K562 (cell line): ENCODE measurements at regions of chrX and their contacts with region 1.

Region 1: DNA sequence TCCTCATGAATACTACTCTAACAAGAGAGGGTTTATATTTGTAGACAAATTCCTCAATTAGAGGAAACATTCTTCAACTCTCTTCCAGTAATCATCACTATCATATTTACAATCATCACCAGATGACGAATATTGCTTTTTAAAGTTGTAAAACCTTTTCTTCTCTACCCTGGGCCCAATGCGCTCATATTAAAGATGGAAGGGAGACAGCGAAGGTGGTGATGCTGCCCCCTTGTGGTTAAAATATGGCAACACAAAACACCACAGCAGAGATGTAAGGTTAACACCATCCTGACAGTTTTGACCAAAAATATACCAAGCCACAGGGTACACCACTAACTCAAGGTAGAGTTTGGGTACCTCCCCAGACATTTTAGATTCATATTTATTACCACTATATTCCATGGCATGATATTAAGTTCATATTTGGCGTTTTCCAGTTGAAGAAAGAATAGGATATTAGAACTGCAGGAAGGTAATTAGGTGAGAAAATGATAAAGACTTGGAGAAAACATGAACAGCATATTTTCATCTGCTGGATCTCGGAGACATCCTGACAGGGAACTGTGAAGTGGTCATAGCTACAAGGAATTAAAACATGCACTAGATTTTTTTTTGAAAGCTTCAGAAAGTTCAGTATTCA is 72.8 kb downstream of the SLC9A7 start:
- DNase-seq: peak; percentile 22 to 50 (median 40)
- ATAC-seq: peak; percentile 84
- H3K4me3 ChIP-seq: no peak overlapping the region
- H3K27ac ChIP-seq: no peak overlapping the region
- H3K4me1 ChIP-seq: no peaks in the 10 kb centered on the region
- H3K27me3 ChIP-seq: no peaks in the 10 kb centered on the region
- CTCF ChIP-seq: peak; percentile 55 to 64 (median 62)
- EP300 ChIP-seq: no peak
- POLR2A ChIP-seq: no peak
- RAD21 ChIP-seq: peak in 1 of 2 experiments; percentile 59; a peak in 2 of 4 replicates

Region 2: GRCh38 chrX:46381630-46382029 is 304.5 kb before region 1 on chrX:
- CTCF ChIA-PET with region 1: no interaction called
- POLR2A ChIA-PET with region 1: no interaction called
- in situ Hi-C with region 1: no loop called
- intact Hi-C with region 1: loop called (anchors 5 kb)
- DNase-seq: peak in 3 of 4 experiments; percentile 5 to 31 (median 6)
- ATAC-seq: peak; percentile 78
- H3K4me3 ChIP-seq: no peak overlapping the region
- H3K27ac ChIP-seq: no peak overlapping the region
- H3K4me1 ChIP-seq: no peaks in the 10 kb centered on the region
- H3K27me3 ChIP-seq: no peaks in the 10 kb centered on the region
- CTCF ChIP-seq: peak; percentile 54 to 59 (median 58)
- EP300 ChIP-seq: no peak
- POLR2A ChIP-seq: no peak
- RAD21 ChIP-seq: peak; percentile 14 to 49; a peak in 2 of 4 replicates

Region 3: GRCh38 chrX:46545111-46546005 is 140.8 kb before region 1 on chrX and contains the start of gene ZNF674:
- CTCF ChIA-PET with region 1: no interaction called
- POLR2A ChIA-PET with region 1: no interaction called
- in situ Hi-C with region 1: no loop called
- intact Hi-C with region 1: loop called (anchors 5 kb)
- DNase-seq: peak; percentile 88 to 93 (median 89)
- ATAC-seq: peak; percentile 95
- H3K4me3 ChIP-seq: peak within 1 kb of the TSS; percentile 83
- H3K27ac ChIP-seq: peak within 1 kb of the TSS; percentile 89
- H3K4me1 ChIP-seq: no peaks in the 10 kb centered on the region; a peak in 2 of 5 replicates
- H3K27me3 ChIP-seq: no peaks in the 10 kb centered on the region
- CTCF ChIP-seq: peak; percentile 41 to 65 (median 53)
- EP300 ChIP-seq: peak; percentile 22; the same call in 1 of the 2 replicates
- POLR2A ChIP-seq: peak; percentile 84
- RAD21 ChIP-seq: no peak
- polyA plus RNA-seq, gene ZNF674: 1.2 to 1.6 TPM